PC-9 (cell line): ENCODE measurements at regions of chr19 and their contacts with region 1.

Region 1: DNA sequence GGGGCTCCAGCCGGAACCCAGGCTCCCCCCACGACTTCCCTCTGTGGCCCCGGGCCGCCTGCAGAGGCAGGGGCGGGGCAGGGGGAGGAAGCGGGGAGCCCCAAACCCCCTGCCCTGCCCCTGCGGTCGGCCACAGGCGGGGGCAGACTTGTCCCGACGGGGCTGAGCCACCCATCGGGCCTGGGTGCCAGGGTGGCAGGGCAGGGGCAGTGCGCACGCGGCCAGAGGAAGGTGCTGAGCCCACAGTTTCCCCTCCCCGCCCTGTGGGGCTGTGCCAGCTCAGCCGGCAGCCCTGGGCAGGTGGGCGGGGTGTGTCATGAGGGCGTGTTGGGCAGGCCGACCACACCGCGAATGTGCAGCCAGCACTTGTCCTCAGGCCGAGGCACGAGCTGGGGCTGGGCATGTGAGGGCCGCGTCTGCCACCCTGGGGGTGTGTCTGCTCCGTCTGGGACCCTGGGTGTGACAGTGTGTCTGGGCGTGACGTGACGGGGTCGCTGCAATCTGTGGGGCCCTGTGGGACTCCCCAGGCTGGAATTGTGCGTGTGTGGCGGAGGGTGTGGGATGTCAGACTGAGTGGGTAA is 17.7 kb downstream of the CCDC97 start:
- DNase-seq: peak; percentile 65 to 92
- H3K4me3 ChIP-seq: peak overlapping the region; percentile 30; the same call in 1 of the 2 replicates
- H3K27ac ChIP-seq: no peak overlapping the region
- H3K4me1 ChIP-seq: peaks cover 16% of the 10 kb centered on the region
- H3K27me3 ChIP-seq: no peaks in the 10 kb centered on the region
- CTCF ChIP-seq: no peak

Region 2: DNA sequence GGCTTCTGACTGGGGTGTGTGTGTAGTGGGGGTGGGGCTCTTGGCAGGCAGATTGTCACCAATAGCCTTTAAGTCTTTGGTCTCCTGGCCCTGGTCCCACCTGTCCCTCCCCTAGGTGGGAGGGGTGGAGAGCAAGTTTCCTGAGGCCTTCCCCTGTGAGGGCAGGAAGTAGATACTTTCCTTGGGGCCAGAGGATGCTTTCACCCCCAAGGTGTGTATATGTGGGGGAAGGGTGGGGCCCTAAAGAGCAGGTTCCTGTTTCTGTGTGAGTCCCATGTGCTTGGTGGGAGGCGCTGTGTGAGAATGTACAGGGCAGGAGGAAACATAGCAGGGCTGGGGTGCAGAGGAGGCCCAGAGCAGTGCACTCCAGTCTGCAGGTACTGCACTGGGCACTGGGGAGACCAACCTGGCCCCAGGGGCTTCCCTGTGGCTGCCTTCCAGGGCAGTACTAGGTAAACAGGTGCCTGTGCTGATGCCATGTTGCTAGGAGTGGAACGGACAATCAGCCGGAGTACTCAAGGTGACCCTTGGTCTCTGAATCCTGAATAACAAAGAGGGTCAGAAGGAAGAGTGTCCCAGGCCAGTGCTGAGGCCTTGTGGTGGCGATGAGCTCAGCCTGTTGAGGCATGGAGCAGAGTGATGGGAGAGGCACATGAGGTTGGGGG is 523.7 kb before region 1 on chr19:
- CTCF ChIA-PET with region 1: no interaction called
- POLR2A ChIA-PET with region 1: no interaction called
- intact Hi-C with region 1: no loop called
- DNase-seq: peak in 1 of 2 experiments; percentile 45
- H3K4me3 ChIP-seq: no peak overlapping the region
- H3K27ac ChIP-seq: no peak overlapping the region
- H3K4me1 ChIP-seq: peaks cover 32% of the 10 kb centered on the region
- H3K27me3 ChIP-seq: no peaks in the 10 kb centered on the region
- CTCF ChIP-seq: no peak

Region 3: GRCh38 chr19:41161903-41162302 is 165.8 kb before region 1 on chr19:
- CTCF ChIA-PET with region 1: no interaction called
- POLR2A ChIA-PET with region 1: no interaction called
- intact Hi-C with region 1: no loop called
- DNase-seq: no peak
- H3K4me3 ChIP-seq: no peak overlapping the region
- H3K27ac ChIP-seq: no peak overlapping the region
- H3K4me1 ChIP-seq: peaks cover 17% of the 10 kb centered on the region
- H3K27me3 ChIP-seq: no peaks in the 10 kb centered on the region
- CTCF ChIP-seq: peak; percentile 40; the same call in 1 of the 2 replicates

Region 4: DNA sequence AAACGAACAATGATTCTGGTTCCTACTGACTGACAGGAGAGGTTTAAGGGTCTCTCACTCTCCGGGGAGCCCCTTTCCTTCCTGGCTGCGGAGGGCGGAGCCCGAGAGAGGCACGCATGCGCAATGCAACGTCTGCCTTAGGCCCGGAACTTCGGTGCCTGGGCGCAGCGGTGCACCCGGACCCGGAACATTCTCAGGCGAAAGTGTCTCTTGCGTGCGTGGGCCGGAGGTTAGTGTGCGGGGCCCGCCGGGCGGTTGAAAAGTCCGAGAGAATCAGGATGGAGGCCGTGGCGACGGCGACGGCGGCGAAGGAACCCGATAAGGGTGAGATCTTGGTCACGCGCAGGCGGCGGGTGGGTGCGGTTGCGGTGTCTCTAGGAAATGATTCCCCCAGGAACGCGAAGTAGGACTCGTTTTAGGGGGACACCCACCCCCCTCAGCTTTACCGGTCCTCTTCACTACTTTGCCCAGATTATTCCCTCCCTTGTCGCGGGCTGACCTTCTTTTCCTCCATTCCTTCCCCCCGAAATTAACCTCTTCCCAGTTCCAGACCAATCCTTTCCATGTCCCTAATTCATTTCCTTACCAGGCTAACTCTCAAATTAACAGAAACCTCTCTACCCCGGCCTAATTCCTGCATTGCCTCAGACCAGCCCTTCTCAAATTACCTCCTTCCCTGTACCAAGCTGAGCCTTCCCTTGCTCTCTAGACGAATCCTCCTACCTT is 17.5 kb before region 1 on chr19 and contains the start of gene CCDC97:
- CTCF ChIA-PET with region 1: no interaction called
- POLR2A ChIA-PET with region 1: interaction called, 23 read pairs
- intact Hi-C with region 1: no loop called
- DNase-seq: peak; percentile 67 to 84
- H3K4me3 ChIP-seq: peak within 1 kb of the TSS; percentile 88
- H3K27ac ChIP-seq: peak within 1 kb of the TSS; percentile 87
- H3K4me1 ChIP-seq: peaks cover 16% of the 10 kb centered on the region
- H3K27me3 ChIP-seq: no peaks in the 10 kb centered on the region
- CTCF ChIP-seq: no peak
- total RNA-seq, gene CCDC97: 24.1 and 26.4 TPM in 2 replicates

Region 5: DNA sequence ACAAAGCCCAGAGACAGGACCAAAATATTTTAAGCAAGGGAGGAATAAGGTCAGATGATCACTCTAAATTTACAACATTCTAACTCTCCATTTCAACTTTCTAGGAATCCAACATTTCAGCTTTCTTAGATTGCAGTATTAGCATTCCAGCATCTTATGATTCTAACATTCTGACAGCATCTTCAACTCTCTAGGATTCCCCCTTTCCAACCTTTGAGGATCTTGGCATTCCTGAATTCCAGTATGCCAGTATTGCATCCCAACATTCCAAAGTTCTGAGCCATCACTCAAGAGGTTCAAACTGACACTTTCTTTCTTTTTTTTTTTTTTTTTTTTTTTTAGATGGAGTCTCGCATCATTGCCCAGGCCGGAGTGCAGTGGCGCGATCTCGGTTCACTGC is 12.3 kb after region 1 on chr19:
- CTCF ChIA-PET with region 1: no interaction called
- POLR2A ChIA-PET with region 1: interaction called, 11 read pairs
- intact Hi-C with region 1: no loop called
- DNase-seq: no peak
- H3K4me3 ChIP-seq: no peak overlapping the region
- H3K27ac ChIP-seq: no peak overlapping the region
- H3K4me1 ChIP-seq: no peaks in the 10 kb centered on the region
- H3K27me3 ChIP-seq: no peaks in the 10 kb centered on the region
- CTCF ChIP-seq: no peak

Region 6: GRCh38 chr19:41363753-41364523 is 36.3 kb after region 1 on chr19 and contains the start of gene B9D2:
- CTCF ChIA-PET with region 1: no interaction called
- POLR2A ChIA-PET with region 1: interaction called, 22 read pairs
- intact Hi-C with region 1: no loop called
- DNase-seq: peak; percentile 93 to 97
- H3K4me3 ChIP-seq: peak within 1 kb of the TSS; percentile 78
- H3K27ac ChIP-seq: peak within 1 kb of the TSS; percentile 88
- H3K4me1 ChIP-seq: peaks cover 21% of the 10 kb centered on the region
- H3K27me3 ChIP-seq: no peaks in the 10 kb centered on the region
- CTCF ChIP-seq: no peak
- total RNA-seq, gene B9D2: 8.0 and 10.8 TPM in 2 replicates

Region 7: DNA sequence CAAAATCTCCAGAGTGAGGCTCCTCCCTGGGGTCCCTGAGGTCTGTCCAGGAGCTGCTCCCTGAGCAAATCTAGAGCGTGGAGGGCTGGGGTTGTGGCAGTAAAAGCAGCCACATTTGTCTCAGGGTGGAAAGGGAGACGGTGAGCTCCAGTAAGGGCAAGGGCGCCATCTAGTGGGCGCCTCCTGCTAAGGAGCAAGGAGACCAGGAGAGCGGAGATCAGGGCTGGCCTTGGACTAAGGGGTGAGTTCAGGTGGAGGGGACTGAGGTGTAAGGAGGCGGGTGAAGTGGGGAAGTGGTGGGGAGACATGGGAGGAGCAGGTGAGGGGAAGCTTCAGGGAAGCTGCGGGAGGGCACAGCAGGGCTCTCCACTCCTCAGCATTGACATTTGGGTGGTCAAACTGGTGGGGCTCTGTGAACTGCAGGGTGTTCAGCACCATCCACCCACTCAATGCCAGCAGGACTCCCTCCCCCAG is 243.0 kb after region 1 on chr19:
- CTCF ChIA-PET with region 1: no interaction called
- POLR2A ChIA-PET with region 1: no interaction called
- intact Hi-C with region 1: loop called (anchors 10 kb)
- DNase-seq: peak in 1 of 2 experiments; percentile 69
- H3K4me3 ChIP-seq: no peak overlapping the region
- H3K27ac ChIP-seq: no peak overlapping the region
- H3K4me1 ChIP-seq: no peaks in the 10 kb centered on the region
- H3K27me3 ChIP-seq: peaks cover 57% of the 10 kb centered on the region
- CTCF ChIP-seq: peak; percentile 93